PC-9 (cell line): ENCODE measurements at regions of chr5 and their contacts with region 1.

Region 1: DNA sequence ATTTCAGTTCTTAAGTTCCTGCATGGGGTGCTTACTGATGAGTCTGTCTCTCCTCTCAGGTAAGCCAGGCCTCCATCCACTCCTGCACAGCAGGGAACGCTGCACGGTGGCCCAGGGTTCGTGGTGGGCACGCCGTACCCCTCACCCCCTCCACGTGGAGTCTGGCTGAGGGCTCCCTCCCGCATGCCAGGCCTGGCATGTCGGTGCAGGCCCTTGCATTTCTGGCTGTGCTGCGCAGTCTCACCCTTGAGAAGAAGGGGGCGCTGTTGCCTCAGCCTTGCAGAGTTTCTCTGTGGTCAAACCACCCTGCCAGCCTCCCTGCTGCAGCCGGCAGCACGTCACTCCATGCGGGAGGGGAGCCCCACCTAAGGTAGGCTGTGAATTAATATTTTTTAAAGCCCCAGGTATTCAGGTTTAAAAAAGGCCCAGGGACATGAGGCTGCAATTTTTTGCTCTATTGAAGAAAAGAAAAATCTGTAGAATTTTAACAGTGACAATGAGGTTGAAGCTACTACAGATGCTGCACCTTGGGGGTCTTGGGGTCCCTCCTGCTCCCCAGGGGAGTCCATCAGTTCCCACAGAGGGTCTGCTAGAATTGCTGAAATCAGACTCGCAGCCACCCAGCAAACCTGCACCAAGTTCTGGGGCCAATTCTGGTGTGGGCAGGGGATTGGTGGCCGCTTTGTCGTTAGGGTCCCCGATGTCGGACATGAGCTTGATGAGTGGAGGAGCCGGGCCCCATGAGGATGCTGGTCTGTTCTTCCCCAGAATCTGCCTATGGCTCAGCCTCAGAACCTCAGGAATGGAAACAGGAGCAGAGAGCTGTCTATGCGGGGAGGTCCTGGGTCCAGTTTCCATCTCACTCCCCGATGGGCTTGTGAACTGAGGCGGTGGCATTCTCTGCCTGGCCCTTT is 52.6 kb downstream of the TENT4A start:
- DNase-seq: peak; percentile 68 to 95
- H3K4me3 ChIP-seq: no peak overlapping the region; the same call in 1 of the 2 replicates
- H3K27ac ChIP-seq: peak overlapping the region; percentile 53
- H3K4me1 ChIP-seq: peaks cover 29% of the 10 kb centered on the region
- H3K27me3 ChIP-seq: no peaks in the 10 kb centered on the region
- CTCF ChIP-seq: peak; percentile 99

Region 2: GRCh38 chr5:6377905-6378765 is 387.7 kb before region 1 on chr5 and contains the start of gene MED10:
- CTCF ChIA-PET with region 1: no interaction called
- POLR2A ChIA-PET with region 1: no interaction called
- intact Hi-C with region 1: loop called (anchors 2 kb)
- DNase-seq: peak; percentile 87 to 98
- H3K4me3 ChIP-seq: peak within 1 kb of the TSS; percentile 93
- H3K27ac ChIP-seq: peak within 1 kb of the TSS; percentile 59
- H3K4me1 ChIP-seq: peaks cover 18% of the 10 kb centered on the region
- H3K27me3 ChIP-seq: no peaks in the 10 kb centered on the region
- CTCF ChIP-seq: no peak
- total RNA-seq, gene MED10: 81.8 and 82.0 TPM in 2 replicates

Region 3: DNA sequence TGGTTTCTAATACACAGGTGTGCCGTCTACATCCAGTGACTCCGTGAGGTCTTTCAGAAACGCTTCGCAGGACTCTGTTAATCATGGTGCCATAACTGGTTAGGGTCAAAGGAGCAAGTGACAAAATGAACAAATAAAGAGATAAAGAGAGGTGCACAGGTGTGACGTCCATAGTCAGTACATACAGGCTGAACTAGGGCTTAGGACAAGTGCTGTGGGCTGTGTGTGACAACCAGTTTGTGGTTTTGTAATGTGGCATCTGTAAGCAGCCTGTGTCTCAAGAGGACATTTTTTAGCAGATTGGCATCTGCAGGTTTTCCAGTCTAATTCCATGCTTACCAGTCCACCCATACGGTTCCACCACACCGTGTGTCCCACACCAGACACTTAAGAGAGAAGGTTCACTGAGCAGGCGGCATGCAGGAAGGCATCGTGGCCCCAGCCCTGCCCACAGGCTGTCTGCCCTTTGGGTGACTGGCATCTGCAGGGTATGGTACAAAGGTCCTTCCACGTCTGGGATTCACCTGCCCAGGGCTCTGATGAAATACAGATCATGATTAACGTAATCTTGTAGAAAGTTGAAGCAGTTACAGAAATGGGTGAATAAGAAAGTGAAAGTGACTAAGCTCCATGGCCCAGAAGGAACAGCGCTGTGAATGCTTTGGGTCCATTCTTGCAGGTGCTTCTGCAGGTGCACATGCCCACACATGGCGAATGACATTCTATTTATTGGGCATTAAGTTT is 105.8 kb before region 1 on chr5:
- CTCF ChIA-PET with region 1: no interaction called
- POLR2A ChIA-PET with region 1: no interaction called
- intact Hi-C with region 1: no loop called
- DNase-seq: no peak
- H3K4me3 ChIP-seq: no peak overlapping the region
- H3K27ac ChIP-seq: peak overlapping the region; percentile 22; the same call in 1 of the 2 replicates
- H3K4me1 ChIP-seq: no peaks in the 10 kb centered on the region
- H3K27me3 ChIP-seq: no peaks in the 10 kb centered on the region
- CTCF ChIP-seq: no peak

Region 4: GRCh38 chr5:6712577-6713275 is 53.1 kb before region 1 on chr5:
- CTCF ChIA-PET with region 1: no interaction called
- POLR2A ChIA-PET with region 1: no interaction called
- intact Hi-C with region 1: loop called (anchors 2 kb)
- DNase-seq: peak; percentile 92 to 100
- H3K4me3 ChIP-seq: peak overlapping the region; percentile 72
- H3K27ac ChIP-seq: peak overlapping the region; percentile 88
- H3K4me1 ChIP-seq: peaks cover 32% of the 10 kb centered on the region
- H3K27me3 ChIP-seq: no peaks in the 10 kb centered on the region
- CTCF ChIP-seq: 0 out of 2 replicates have a peak, but pooled peaks have one; percentile 15

Region 5: GRCh38 chr5:6837519-6838110 is 71.7 kb after region 1 on chr5:
- CTCF ChIA-PET with region 1: no interaction called
- POLR2A ChIA-PET with region 1: no interaction called
- intact Hi-C with region 1: loop called (anchors 1 kb)
- DNase-seq: peak in 1 of 2 experiments; percentile 55
- H3K4me3 ChIP-seq: no peak overlapping the region
- H3K27ac ChIP-seq: no peak overlapping the region
- H3K4me1 ChIP-seq: no peaks in the 10 kb centered on the region
- H3K27me3 ChIP-seq: peaks cover 48% of the 10 kb centered on the region
- CTCF ChIP-seq: peak; percentile 90

Region 6: GRCh38 chr5:7391814-7392692 is 626.2 kb after region 1 on chr5:
- CTCF ChIA-PET with region 1: no interaction called
- POLR2A ChIA-PET with region 1: no interaction called
- intact Hi-C with region 1: loop called (anchors 1 kb)
- DNase-seq: no peak
- H3K4me3 ChIP-seq: no peak overlapping the region
- H3K27ac ChIP-seq: no peak overlapping the region
- H3K4me1 ChIP-seq: no peaks in the 10 kb centered on the region
- H3K27me3 ChIP-seq: peaks cover 9% of the 10 kb centered on the region; the same call in 1 of the 2 replicates
- CTCF ChIP-seq: peak; percentile 63

Region 7: DNA sequence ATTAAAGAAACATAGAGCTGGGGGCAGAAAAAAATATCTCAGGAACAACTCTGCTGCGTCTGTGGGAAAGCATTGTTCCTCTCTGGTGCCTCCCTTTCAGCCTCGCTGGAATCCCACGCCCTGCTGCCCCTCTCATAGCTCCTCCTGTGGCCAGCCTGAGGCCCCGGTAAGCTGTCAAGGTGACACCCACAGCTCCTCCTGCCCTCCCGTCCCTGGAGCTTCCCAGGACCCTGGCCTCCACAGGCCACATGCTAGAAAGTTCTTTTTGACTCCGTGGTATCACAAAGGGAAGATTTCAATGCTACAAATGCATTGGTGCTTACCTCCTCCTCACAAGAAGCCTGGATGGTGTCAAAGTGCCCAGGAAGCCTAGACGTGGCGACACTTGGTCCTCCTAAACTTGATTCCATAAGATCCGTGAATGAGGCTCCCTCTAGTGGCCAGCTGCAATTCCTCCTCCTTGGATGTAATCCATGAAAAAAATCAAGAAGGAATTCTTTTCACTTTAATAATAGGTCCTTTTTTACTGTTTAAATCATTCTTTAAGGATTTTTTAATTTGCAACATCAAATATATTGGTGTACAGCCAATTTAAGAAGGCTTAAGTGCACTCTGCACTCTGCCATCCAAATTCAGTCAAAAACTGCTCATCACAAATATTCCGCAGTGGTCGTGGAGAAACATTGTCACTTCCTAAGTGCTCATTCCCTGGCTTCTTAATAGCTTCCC is 980.2 kb after region 1 on chr5:
- CTCF ChIA-PET with region 1: no interaction called
- POLR2A ChIA-PET with region 1: no interaction called
- intact Hi-C with region 1: loop called (anchors 1 kb)
- DNase-seq: peak; percentile 52 to 76
- H3K4me3 ChIP-seq: no peak overlapping the region
- H3K27ac ChIP-seq: no peak overlapping the region
- H3K4me1 ChIP-seq: no peaks in the 10 kb centered on the region
- H3K27me3 ChIP-seq: peaks cover 40% of the 10 kb centered on the region
- CTCF ChIP-seq: peak; percentile 98

Region 8: GRCh38 chr5:7815892-7816534 is 1050.1 kb after region 1 on chr5:
- CTCF ChIA-PET with region 1: no interaction called
- POLR2A ChIA-PET with region 1: no interaction called
- intact Hi-C with region 1: loop called (anchors 2 kb)
- DNase-seq: peak in 1 of 2 experiments; percentile 77
- H3K4me3 ChIP-seq: no peak overlapping the region
- H3K27ac ChIP-seq: no peak overlapping the region
- H3K4me1 ChIP-seq: no peaks in the 10 kb centered on the region
- H3K27me3 ChIP-seq: peaks cover 96% of the 10 kb centered on the region
- CTCF ChIP-seq: peak; percentile 92